ENCODE measurements at regions of chr2 and their contacts with region 1.

Region 1: DNA sequence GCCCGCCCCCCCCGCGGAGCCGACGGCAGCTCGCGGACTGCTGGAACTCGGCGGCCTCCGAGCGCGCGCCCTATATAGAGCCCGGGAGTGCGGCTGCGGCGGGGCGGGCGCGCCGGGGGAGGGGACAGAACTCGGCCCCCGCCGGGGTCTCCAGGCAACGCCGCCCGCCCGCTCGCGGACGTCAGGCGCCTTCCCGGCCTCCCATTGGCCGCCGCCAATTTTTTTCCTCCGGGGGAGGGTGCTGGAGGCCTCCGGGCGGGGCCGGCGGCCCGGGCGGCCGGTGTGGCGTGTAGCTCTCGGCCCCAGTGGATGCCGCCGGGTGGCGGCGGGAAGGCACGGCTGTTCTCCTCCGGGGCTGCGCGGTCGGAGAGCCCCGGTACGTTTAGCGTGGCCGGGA is at the start of gene ZFP36L2:
- DNase-seq: no peak
- ATAC-seq: peak; percentile 82
- H3K4me3 ChIP-seq: peak within 1 kb of the TSS; percentile 80 to 90
- H3K27ac ChIP-seq: peak within 1 kb of the TSS; percentile 93
- H3K4me1 ChIP-seq: peaks cover 28% of the 10 kb centered on the region
- H3K27me3 ChIP-seq: no peaks in the 10 kb centered on the region
- CTCF ChIP-seq: no peak
- total RNA-seq, gene ZFP36L2: 46.3 TPM

Region 2: DNA sequence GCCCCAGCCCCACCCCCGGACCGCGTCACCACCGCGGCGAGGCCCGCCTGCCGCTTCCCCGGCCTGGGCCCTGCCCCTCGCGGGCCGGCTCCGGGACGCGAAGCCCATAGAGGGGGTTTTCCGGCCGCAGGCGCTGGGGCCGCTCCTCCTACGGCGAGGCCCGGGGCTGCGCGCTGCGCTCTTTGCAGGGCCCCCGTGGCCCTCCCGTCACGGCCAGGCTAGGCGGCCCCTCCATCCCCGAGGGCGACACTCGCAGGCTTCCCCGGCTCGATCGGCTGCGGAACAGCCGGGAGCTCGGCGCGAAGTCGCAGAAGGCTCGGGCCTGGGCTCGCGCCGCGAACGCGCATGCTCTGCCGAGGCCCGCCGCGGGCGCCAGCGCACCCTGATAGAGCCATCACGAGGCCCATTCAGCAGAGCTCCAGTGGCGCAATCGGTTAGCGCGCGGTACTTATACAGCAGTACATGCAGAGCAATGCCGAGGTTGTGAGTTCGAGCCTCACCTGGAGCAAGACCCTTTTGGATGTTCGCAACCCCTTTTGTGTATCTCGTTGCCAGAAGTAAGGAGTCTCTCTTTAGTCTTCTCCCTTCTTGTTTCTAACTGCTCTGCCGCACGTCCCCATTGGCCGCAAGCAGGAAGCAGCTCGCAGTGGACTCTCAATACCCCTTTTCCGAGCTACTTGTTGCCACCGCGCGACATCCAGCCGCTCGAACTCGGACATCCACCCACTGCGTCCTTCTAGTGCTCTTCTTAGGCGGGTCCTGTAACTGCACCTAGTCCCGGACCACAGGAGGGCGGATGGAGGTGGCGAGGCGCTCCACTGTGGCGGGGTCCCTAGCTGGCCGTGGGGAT is 416.2 kb before region 1 on chr2:
- CTCF ChIA-PET with region 1: interaction called, 4 read pairs
- POLR2A ChIA-PET with region 1: interaction called, 11 read pairs
- in situ Hi-C with region 1: no loop called
- intact Hi-C with region 1: no loop called
- DNase-seq: peak; percentile 97
- ATAC-seq: peak; percentile 93
- H3K4me3 ChIP-seq: peak overlapping the region; percentile 63 to 80
- H3K27ac ChIP-seq: peak overlapping the region; percentile 96
- H3K4me1 ChIP-seq: peaks cover 6% of the 10 kb centered on the region
- H3K27me3 ChIP-seq: no peaks in the 10 kb centered on the region
- CTCF ChIP-seq: no peak; the same call in none of the 2 replicates

Region 3: DNA sequence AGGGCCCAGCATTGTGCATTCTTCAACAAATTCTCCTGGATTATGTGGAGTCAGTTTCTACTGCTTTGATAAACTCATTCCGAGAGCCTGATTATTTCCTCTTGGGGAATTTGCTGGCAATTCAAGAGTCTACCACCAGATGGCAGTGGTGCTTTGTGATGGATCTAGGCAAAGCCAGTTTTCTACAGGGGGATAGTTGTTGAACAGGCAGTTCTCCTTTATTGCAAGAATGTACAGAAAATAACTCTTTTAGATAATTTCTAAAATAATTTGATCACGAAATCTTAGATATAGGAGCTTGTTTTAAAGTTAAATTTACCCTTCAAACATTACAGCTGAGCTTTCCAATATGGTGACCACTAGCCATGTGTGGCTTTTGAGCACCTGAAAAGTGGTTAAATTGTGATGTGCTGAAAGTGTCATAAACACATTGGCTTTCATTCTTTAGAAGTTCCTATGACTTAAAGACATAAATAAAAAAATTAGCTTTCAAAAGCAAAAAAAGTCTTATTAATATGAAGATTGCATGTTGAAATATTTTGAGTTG is 367.5 kb before region 1 on chr2:
- CTCF ChIA-PET with region 1: interaction called, 9 read pairs
- POLR2A ChIA-PET with region 1: interaction called, 3 read pairs
- in situ Hi-C with region 1: no loop called
- intact Hi-C with region 1: loop called (anchors 5 kb)
- DNase-seq: peak; percentile 67
- ATAC-seq: no peak
- H3K4me3 ChIP-seq: no peak overlapping the region
- H3K27ac ChIP-seq: no peak overlapping the region
- H3K4me1 ChIP-seq: no peaks in the 10 kb centered on the region
- H3K27me3 ChIP-seq: no peaks in the 10 kb centered on the region
- CTCF ChIP-seq: peak; percentile 91

Region 4: DNA sequence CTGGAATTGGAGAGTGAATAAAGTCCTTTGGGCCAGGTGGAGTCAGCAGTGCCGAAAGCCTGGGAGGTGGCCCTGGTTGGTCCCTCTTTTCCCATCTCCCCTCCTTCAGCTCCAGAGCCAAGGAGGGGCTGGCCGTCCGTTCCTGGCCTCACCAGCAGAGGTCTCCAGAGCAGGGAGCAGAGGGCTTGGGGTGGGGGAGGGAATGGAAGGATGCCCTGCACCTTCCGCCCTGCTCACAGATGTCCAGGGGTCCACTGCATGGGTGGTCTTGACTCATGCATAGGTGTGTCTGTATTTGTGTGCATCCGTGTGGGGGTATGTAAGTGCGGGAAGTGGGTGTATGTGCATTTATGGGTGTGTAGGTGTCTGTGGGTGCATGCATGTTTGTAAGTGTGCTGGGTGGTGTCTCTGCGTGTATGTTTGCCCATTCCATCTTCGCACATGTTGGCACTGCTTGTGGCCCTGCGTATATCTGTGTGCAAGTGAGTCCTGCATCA is 202.0 kb before region 1 on chr2:
- CTCF ChIA-PET with region 1: interaction called, 3 read pairs
- POLR2A ChIA-PET with region 1: no interaction called
- in situ Hi-C with region 1: no loop called
- intact Hi-C with region 1: loop called (anchors 10 kb)
- DNase-seq: peak; percentile 20
- ATAC-seq: peak; percentile 90
- H3K4me3 ChIP-seq: no peak overlapping the region
- H3K27ac ChIP-seq: no peak overlapping the region; the same call in 1 of the 2 replicates
- H3K4me1 ChIP-seq: peaks cover 3% of the 10 kb centered on the region; the same call in 1 of the 2 replicates
- H3K27me3 ChIP-seq: no peaks in the 10 kb centered on the region
- CTCF ChIP-seq: peak; percentile 90

Region 5: GRCh38 chr2:43131024-43131889 is 95.3 kb before region 1 on chr2:
- CTCF ChIA-PET with region 1: interaction called, 12 read pairs
- POLR2A ChIA-PET with region 1: interaction called, 3 read pairs
- in situ Hi-C with region 1: no loop called
- intact Hi-C with region 1: loop called (anchors 2 kb)
- DNase-seq: peak; percentile 24
- ATAC-seq: peak; percentile 86
- H3K4me3 ChIP-seq: no peak overlapping the region
- H3K27ac ChIP-seq: peak overlapping the region; percentile 75
- H3K4me1 ChIP-seq: peaks cover 20% of the 10 kb centered on the region
- H3K27me3 ChIP-seq: no peaks in the 10 kb centered on the region
- CTCF ChIP-seq: no peak; the same call in 1 of the 2 replicates

Region 6: GRCh38 chr2:43210467-43211303 is 15.9 kb before region 1 on chr2:
- CTCF ChIA-PET with region 1: no interaction called
- POLR2A ChIA-PET with region 1: no interaction called
- in situ Hi-C with region 1: no loop called
- intact Hi-C with region 1: no loop called
- DNase-seq: no peak
- ATAC-seq: peak; percentile 28; the same call in 1 of the 2 replicates
- H3K4me3 ChIP-seq: no peak overlapping the region
- H3K27ac ChIP-seq: no peak overlapping the region
- H3K4me1 ChIP-seq: no peaks in the 10 kb centered on the region
- H3K27me3 ChIP-seq: no peaks in the 10 kb centered on the region
- CTCF ChIP-seq: no peak

Region 7: DNA sequence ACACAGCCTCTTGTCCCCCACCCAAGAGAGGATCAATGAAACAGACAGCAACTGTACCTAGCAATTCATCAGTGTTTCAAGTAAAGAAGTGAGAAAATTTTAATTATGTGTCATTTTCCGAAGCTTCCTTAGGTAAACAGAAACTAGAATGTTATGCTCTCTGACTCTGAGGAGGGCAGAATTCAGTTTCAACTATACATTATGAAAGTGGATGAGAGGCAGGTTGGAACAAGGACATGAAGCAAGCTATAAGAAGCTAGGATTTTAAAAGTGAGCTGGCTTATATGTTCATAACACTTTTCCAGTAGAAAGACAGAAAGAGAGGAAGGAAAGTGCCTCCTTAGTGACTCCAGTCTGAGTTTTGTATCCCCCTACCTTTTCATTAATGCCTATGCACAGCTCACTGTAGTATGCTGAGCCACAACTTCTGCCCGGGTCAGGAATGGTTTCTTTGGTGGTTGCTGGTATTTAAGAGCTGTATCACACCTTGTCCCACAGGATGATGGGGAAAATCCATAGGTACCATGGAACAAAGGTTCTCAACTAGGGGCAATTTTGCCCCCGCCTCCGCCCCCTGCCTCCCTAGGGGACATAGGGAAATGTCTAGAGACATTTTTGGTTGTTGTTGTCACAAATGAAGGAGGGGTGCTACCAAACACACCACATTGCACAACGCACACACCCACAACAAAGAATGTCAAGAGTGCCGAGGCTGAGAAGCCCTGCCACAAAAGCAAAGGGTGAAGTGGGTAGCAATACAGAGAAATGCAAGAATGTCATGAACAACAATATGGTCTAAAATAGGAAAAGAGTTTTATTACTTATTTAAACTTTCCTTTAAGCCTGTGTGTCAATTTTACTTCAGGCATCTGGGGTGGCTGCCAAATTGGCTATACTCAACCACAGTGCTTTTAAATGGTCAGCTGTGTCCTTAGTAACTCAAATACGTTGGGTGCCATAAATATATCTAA is 160.8 kb after region 1 on chr2:
- CTCF ChIA-PET with region 1: no interaction called
- POLR2A ChIA-PET with region 1: no interaction called
- in situ Hi-C with region 1: no loop called
- intact Hi-C with region 1: no loop called
- DNase-seq: no peak
- ATAC-seq: no peak
- H3K4me3 ChIP-seq: no peak overlapping the region
- H3K27ac ChIP-seq: no peak overlapping the region
- H3K4me1 ChIP-seq: peaks cover 15% of the 10 kb centered on the region; the same call in 1 of the 2 replicates
- H3K27me3 ChIP-seq: no peaks in the 10 kb centered on the region
- CTCF ChIP-seq: no peak

Region 8: GRCh38 chr2:43484323-43484930 is 257.9 kb after region 1 on chr2:
- CTCF ChIA-PET with region 1: interaction called, 6 read pairs
- POLR2A ChIA-PET with region 1: no interaction called
- in situ Hi-C with region 1: no loop called
- intact Hi-C with region 1: loop called (anchors 2 kb)
- DNase-seq: peak; percentile 64
- ATAC-seq: peak; percentile 76; the same call in 1 of the 2 replicates
- H3K4me3 ChIP-seq: no peak overlapping the region
- H3K27ac ChIP-seq: no peak overlapping the region
- H3K4me1 ChIP-seq: no peaks in the 10 kb centered on the region; the same call in 1 of the 2 replicates
- H3K27me3 ChIP-seq: no peaks in the 10 kb centered on the region
- CTCF ChIP-seq: peak; percentile 62; the same call in 1 of the 2 replicates

Measured in Panc1 (cell line).